Colonic mucosa (tissue), 4 donors: ENCODE measurements at regions of chr16 and their contacts with region 1.

Region 1: GRCh38 chr16:15466886-15467781 is 32.7 kb downstream of the BMERB1 start:
- DNase-seq: no peak
- H3K4me3 ChIP-seq: no peak overlapping the region
- H3K27ac ChIP-seq: no peak overlapping the region
- H3K4me1 ChIP-seq: no peaks in the 10 kb centered on the region
- H3K27me3 ChIP-seq: no peaks in the 10 kb centered on the region
- CTCF ChIP-seq: no peak

Region 2: DNA sequence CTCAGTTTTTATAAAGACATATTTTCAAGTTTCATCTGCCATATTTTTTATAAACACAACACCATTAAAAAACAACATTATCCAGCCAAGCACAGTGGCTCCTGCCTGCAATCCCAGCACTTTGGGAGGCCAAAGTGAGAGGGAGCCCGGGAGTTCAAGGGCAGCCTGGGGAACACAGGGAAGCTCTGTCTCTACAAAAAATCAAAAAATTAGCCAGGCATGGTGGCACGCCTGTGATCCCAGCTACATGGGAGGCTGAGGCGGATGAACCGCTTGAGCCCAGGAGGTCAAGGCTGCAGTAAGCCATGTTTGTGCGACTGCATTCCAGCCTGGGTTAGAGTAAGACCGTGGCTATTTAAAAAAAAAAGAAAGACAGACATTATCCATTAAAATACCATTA is 394.0 kb before region 1 on chr16:
- intact Hi-C with region 1: loop called (anchors 10 kb)
- DNase-seq: no peak
- H3K4me3 ChIP-seq: no peak overlapping the region
- H3K27ac ChIP-seq: no peak overlapping the region
- H3K4me1 ChIP-seq: no peaks in the 10 kb centered on the region
- H3K27me3 ChIP-seq: no peaks in the 10 kb centered on the region
- CTCF ChIP-seq: no peak